ENCODE measurements at regions of chr1 and their contacts with region 1.

Region 1: DNA sequence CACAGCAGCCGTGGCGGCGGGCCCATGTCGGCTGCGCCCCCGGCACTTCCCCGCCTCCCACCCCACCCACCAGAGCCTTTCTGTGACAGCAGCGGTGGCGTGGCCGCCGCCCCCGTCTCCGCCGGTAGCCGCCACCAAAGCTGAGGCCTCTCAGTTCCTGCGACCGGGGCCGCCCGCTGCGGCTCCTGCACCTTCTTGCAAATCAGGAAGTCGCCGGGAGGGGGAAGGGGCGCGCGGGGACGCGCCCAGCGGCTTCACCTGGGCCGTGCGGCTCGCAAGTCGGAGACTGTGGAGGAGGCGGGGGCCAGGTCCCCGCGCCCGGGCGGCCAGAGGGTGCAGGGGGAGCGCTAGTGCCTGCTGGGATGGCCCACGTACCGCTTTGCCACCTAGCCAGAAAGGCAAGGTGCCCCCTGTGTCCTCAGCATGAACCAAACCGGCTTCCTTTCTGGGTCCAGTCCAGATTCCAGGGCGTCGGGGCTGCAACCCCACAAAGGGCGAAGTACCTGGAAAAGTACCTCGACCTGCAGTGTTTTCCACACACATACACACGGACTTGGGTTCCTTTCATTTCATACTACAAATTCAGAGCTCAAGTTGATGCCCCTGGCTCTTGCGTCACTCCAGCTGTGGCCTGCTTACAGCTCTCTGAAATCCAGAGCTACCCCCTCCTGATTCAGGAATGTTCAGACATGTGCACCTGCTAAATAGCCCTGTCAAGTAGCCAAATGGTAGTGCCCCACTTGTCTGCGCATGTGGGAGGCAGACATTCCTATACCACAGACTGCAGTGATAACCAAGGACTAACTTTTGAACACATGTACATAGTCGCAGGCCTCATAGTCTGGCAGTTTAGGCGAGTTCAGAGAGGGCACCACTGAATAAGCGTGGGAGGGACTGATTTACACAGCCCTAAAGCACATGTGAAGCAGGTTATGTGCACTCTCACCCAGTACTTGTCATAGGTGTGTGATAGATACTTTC is at the start of gene DENND1B:
- DNase-seq: peak; percentile 80
- H3K4me3 Mint-ChIP-seq: peak within 1 kb of the TSS; percentile 85
- H3K27ac Mint-ChIP-seq: peak within 1 kb of the TSS; percentile 95
- H3K4me1 Mint-ChIP-seq: peaks cover 72% of the 10 kb centered on the region
- H3K27me3 Mint-ChIP-seq: no peaks in the 10 kb centered on the region
- total RNA-seq, gene DENND1B: 15.3 and 16.5 TPM in 2 replicates

Region 2: GRCh38 chr1:197526736-197527371 is 248.7 kb before region 1 on chr1:
- intact Hi-C with region 1: loop called (anchors 5 kb)
- DNase-seq: no peak
- H3K4me3 Mint-ChIP-seq: no peak overlapping the region
- H3K27ac Mint-ChIP-seq: no peak overlapping the region
- H3K4me1 Mint-ChIP-seq: no peaks in the 10 kb centered on the region
- H3K27me3 Mint-ChIP-seq: no peaks in the 10 kb centered on the region

Region 3: GRCh38 chr1:197807216-197807615 is 31.6 kb after region 1 on chr1:
- intact Hi-C with region 1: no loop called
- DNase-seq: no peak
- H3K4me3 Mint-ChIP-seq: no peak overlapping the region
- H3K27ac Mint-ChIP-seq: no peak overlapping the region
- H3K4me1 Mint-ChIP-seq: no peaks in the 10 kb centered on the region
- H3K27me3 Mint-ChIP-seq: no peaks in the 10 kb centered on the region

Region 4: GRCh38 chr1:197902454-197903195 is 127.1 kb after region 1 on chr1 and contains the start of gene C1orf53:
- intact Hi-C with region 1: loop called (anchors 1 kb)
- DNase-seq: peak; percentile 78
- H3K4me3 Mint-ChIP-seq: peak within 1 kb of the TSS; percentile 91
- H3K27ac Mint-ChIP-seq: peak within 1 kb of the TSS; percentile 93
- H3K4me1 Mint-ChIP-seq: peaks cover 17% of the 10 kb centered on the region
- H3K27me3 Mint-ChIP-seq: peaks cover 55% of the 10 kb centered on the region
- total RNA-seq, gene C1orf53: 0.81 and 1.3 TPM in 2 replicates

Region 5: GRCh38 chr1:198620951-198621824 is 845.6 kb after region 1 on chr1:
- intact Hi-C with region 1: loop called (anchors 5 kb)
- DNase-seq: peak; percentile 66
- H3K4me3 Mint-ChIP-seq: peak overlapping the region; percentile 84
- H3K27ac Mint-ChIP-seq: peak overlapping the region; percentile 99
- H3K4me1 Mint-ChIP-seq: peaks cover 82% of the 10 kb centered on the region
- H3K27me3 Mint-ChIP-seq: no peaks in the 10 kb centered on the region

Region 6: GRCh38 chr1:198734323-198735008 is 958.9 kb after region 1 on chr1:
- intact Hi-C with region 1: loop called (anchors 10 kb)
- DNase-seq: no peak
- H3K4me3 Mint-ChIP-seq: no peak overlapping the region
- H3K27ac Mint-ChIP-seq: peak overlapping the region; percentile 73
- H3K4me1 Mint-ChIP-seq: peaks cover 79% of the 10 kb centered on the region
- H3K27me3 Mint-ChIP-seq: no peaks in the 10 kb centered on the region

Region 7: DNA sequence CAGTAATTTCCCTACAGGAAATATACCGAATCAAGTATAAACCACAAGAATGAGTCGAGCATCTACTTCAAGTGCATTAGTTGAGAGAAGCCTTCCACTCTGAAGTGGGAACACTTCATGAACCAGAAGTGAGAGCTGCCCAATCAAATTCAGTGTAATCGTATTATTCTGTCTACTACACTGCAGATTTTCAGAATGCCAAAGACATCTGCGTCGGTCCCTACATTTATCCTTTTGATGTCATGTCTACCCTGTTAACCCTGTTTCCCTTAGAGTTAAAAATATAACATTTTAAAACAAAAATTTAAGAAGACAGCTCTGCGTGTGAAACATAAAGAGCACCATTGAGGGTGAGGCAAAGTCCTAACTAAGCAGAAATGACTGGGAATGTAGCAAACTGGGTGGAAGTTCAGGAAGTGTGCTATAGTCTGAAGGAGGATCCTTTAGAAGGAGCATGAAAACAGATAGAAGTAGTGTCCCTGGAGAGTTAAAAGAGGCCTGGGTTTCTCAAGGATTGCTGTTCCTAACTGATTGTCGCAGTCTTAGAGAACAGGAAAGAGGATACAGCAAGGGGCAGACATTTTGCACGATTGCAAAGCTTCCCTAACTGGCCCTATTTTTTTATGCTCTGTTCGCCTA is 1154.5 kb after region 1 on chr1:
- intact Hi-C with region 1: loop called (anchors 5 kb)
- DNase-seq: no peak
- H3K4me3 Mint-ChIP-seq: peak overlapping the region; percentile 86
- H3K27ac Mint-ChIP-seq: peak overlapping the region; percentile 93
- H3K4me1 Mint-ChIP-seq: peaks cover 66% of the 10 kb centered on the region
- H3K27me3 Mint-ChIP-seq: no peaks in the 10 kb centered on the region

Measured in activated T-helper 1 cell treated with anti-CD3 and anti-CD28 coated beads, Interleukin-12 subunit alpha, Interleukin-12 subunit beta, Interleukin-2, Interleukin-4 antibody, amounts not matched to agents 30 ng/mL and 10 ng/mL and 1 ng/mL, durations not matched to agents 14 hours and 24 hours and 36 hours (primary cell).